CD4-positive, alpha-beta memory T cell (primary cell): ENCODE measurements at regions of chr16 and their contacts with region 1.

Region 1: DNA sequence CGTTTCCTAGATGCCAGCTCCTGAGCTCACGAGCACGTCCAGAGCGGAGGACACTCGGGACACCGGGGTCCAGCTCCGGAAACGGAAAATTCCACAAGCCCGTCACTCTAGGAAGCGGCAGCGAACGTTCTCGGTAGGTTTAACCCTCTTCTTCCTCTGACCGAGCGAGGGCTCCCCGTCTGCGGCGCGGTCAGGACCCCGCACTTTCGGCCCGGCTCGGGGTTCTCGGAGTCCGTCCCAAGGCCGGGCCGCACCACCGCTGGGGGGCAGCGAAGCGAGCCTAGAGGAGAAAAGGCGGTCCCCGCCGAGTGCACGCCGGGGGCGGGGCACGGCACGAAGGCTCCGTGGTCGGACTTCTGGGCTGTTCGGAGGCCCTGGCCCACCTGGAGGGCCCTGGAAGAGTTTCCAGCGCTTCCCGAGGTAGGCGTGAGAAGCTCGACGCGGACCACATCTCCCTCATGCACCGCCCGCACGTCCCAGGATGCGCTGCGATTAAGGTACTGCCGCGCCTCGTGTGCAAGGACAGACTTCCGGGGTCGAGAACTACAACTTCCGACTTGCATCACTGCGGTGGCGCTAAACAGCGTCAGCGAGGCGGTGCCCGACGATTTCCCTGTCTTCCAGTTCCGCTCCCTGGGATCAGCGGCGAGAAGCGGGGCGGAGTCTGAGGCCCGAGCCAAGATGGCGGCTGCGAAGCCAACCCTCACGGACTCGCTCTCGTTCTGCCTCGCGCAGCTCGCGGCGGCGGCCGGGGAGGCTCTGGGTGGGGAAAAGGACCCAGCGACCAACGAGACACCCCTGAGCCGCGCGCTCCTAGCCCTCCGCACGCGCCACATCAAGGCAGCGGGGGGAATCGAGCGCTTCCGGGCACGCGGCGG is at the start of gene ARMC5:
- DNase-seq: peak; percentile 98 to 99 (median 99)
- H3K4me3 ChIP-seq: peak within 1 kb of the TSS; percentile 79 to 95
- H3K4me3 Mint-ChIP-seq: peak within 1 kb of the TSS; percentile 91 to 95 (median 94)
- H3K27ac ChIP-seq: peak within 1 kb of the TSS; percentile 99
- H3K27ac Mint-ChIP-seq: peak within 1 kb of the TSS; percentile 94 to 99 (median 98)
- H3K4me1 ChIP-seq: peaks cover 53% of the 10 kb centered on the region
- H3K4me1 Mint-ChIP-seq: peaks cover 25 to 60% (median 37%) of the 10 kb centered on the region in 4 donors
- H3K27me3 ChIP-seq: no peaks in the 10 kb centered on the region
- H3K27me3 Mint-ChIP-seq: no peaks in the 10 kb centered on the region
- total RNA-seq, gene ARMC5: 6.5 to 7.0 TPM

Region 2: DNA sequence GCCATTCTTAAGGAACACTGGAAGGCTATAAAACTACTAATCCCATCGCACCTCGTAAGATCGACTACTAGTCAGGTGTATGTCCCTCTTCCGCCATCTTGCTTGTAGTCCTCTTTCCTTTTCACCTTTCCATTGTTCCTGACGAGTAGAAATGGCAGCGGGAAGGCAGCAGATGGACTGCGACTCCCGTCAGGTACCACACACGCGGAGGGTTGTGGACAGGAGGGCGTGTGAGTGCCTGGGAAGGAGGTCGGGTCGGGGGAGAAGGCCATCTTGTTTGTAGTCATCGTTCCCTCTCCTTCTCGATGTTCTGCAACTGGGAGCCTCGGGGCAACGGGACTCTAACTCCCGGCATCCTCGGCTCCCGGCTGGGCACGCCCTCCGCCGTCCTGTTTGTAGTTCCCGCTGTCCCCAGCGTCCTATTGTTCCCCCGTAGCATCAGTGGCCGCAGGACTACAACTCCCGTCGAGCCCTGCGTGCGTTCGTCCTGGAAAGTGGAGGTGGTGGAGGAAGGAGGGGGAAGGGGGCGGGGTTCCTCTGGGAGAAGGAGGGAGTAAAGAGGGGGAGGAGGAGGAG is 536.0 kb before region 1 on chr16:
- CTCF ChIA-PET with region 1: no interaction called
- POLR2A ChIA-PET with region 1: interaction called, 7 read pairs
- intact Hi-C with region 1: loop called (anchors 1 kb)
- DNase-seq: peak; percentile 95 to 98 (median 97)
- H3K4me3 ChIP-seq: peak overlapping the region; percentile 73 to 92
- H3K4me3 Mint-ChIP-seq: peak overlapping the region; percentile 95 to 100 (median 99)
- H3K27ac ChIP-seq: peak overlapping the region; percentile 90
- H3K27ac Mint-ChIP-seq: peak overlapping the region; percentile 98 to 100 (median 99)
- H3K4me1 ChIP-seq: peaks cover 12% of the 10 kb centered on the region
- H3K4me1 Mint-ChIP-seq: peaks cover 7 to 33% (median 17%) of the 10 kb centered on the region in 4 donors
- H3K27me3 ChIP-seq: no peaks in the 10 kb centered on the region
- H3K27me3 Mint-ChIP-seq: no peaks in the 10 kb centered on the region

Region 3: DNA sequence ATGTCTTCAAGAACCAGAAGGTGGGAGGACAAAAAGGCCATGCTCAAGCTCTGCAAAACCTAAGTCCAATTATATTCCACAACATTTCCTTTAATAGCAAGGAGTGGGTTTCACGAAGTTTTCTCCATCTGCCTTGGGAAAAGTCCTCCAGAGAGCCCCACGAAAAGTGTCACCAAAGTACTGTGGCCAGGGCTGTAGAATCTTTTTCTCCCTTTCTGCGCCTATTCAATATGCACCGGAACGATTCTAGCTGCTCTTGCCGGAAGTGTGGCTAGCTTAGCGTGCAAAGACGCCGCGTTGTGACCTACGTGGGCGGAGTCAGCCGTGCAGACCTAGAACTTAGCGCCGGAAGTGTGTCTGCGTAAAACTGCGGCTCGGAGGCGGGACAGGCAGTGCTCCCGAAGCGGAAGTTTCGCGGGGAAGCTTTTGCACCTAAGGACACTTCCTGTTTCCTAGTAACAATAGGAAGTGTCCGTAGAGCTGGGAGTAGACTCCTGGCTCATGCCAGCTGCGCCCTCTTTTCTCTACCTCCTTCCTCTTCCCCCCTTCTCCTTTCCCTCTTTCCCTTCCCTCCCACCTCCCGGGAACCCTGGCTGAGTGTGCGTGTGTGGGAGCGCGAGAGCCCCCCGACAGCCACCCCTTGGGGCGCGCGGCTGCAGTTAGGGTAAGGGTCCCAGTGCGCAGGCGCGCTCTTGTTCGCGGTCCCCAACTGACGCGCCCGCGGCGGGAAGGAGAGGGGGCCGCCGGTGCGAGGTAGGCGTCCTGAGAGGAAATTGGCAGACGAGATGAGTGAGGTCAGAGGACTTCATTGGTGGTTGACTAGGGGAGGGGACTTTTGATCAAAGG is 384.9 kb before region 1 on chr16 and contains the starts of genes ZNF646 and ZNF668:
- CTCF ChIA-PET with region 1: no interaction called
- POLR2A ChIA-PET with region 1: interaction called, 23 read pairs
- intact Hi-C with region 1: loop called (anchors 1 kb)
- DNase-seq: peak; percentile 94 to 99 (median 98)
- H3K4me3 ChIP-seq: peak within 1 kb of the TSS; percentile 81 to 86
- H3K4me3 Mint-ChIP-seq: peak within 1 kb of the TSS; percentile 92 to 99 (median 97)
- H3K27ac ChIP-seq: peak within 1 kb of the TSS; percentile 87
- H3K27ac Mint-ChIP-seq: peak within 1 kb of the TSS; percentile 93 to 99 (median 98)
- H3K4me1 ChIP-seq: peaks cover 27% of the 10 kb centered on the region
- H3K4me1 Mint-ChIP-seq: peaks cover 20 to 58% (median 30%) of the 10 kb centered on the region in 4 donors
- H3K27me3 ChIP-seq: no peaks in the 10 kb centered on the region
- H3K27me3 Mint-ChIP-seq: peaks cover 0 to 2% of the 10 kb centered on the region in 2 donors
- total RNA-seq, gene ZNF646: 46.9 to 47.0 TPM
- total RNA-seq, gene ZNF668: 11.7 to 13.6 TPM

Region 4: GRCh38 chr16:31179747-31180459 is 279.2 kb before region 1 on chr16 and contains the start of gene FUS:
- CTCF ChIA-PET with region 1: interaction called, 3 read pairs
- POLR2A ChIA-PET with region 1: interaction called, 12 read pairs
- intact Hi-C with region 1: no loop called
- DNase-seq: peak; percentile 89 to 95 (median 94)
- H3K4me3 ChIP-seq: peak within 1 kb of the TSS; percentile 96 to 97
- H3K4me3 Mint-ChIP-seq: peak within 1 kb of the TSS; percentile 97 to 99 (median 98)
- H3K27ac ChIP-seq: peak within 1 kb of the TSS; percentile 89
- H3K27ac Mint-ChIP-seq: peak within 1 kb of the TSS; percentile 95 to 100 (median 99)
- H3K4me1 ChIP-seq: peaks cover 66% of the 10 kb centered on the region
- H3K4me1 Mint-ChIP-seq: peaks cover 41 to 77% (median 54%) of the 10 kb centered on the region in 4 donors
- H3K27me3 ChIP-seq: no peaks in the 10 kb centered on the region
- H3K27me3 Mint-ChIP-seq: no peaks in the 10 kb centered on the region
- total RNA-seq, gene FUS: 500 to 536 TPM

Region 5: GRCh38 chr16:31472709-31473203 is 13.7 kb after region 1 on chr16:
- CTCF ChIA-PET with region 1: interaction called, 38 read pairs
- POLR2A ChIA-PET with region 1: interaction called, 72 read pairs
- intact Hi-C with region 1: loop called (anchors 1 kb)
- DNase-seq: peak in 3 of 5 donors; percentile 21 to 27 (median 25)
- H3K4me3 ChIP-seq: peak overlapping the region in 1 of 2 donors; percentile 27
- H3K4me3 Mint-ChIP-seq: peak overlapping the region; percentile 56 to 90 (median 76)
- H3K27ac ChIP-seq: no peak overlapping the region
- H3K27ac Mint-ChIP-seq: peak overlapping the region in 1 of 7 donors; percentile 42
- H3K4me1 ChIP-seq: peaks cover 34% of the 10 kb centered on the region
- H3K4me1 Mint-ChIP-seq: peaks cover 10 to 32% (median 27%) of the 10 kb centered on the region in 4 donors
- H3K27me3 ChIP-seq: no peaks in the 10 kb centered on the region
- H3K27me3 Mint-ChIP-seq: peaks cover 0 to 13% of the 10 kb centered on the region in 2 donors

Region 6: GRCh38 chr16:31700526-31701388 is 241.7 kb after region 1 on chr16:
- CTCF ChIA-PET with region 1: interaction called, 17 read pairs
- POLR2A ChIA-PET with region 1: interaction called, 21 read pairs
- intact Hi-C with region 1: loop called (anchors 5 kb)
- DNase-seq: peak; percentile 74 to 86 (median 81)
- H3K4me3 ChIP-seq: peak overlapping the region; percentile 61 to 70
- H3K4me3 Mint-ChIP-seq: peak overlapping the region; percentile 88 to 98 (median 92)
- H3K27ac ChIP-seq: peak overlapping the region; percentile 94
- H3K27ac Mint-ChIP-seq: peak overlapping the region; percentile 94 to 99 (median 96)
- H3K4me1 ChIP-seq: peaks cover 28% of the 10 kb centered on the region
- H3K4me1 Mint-ChIP-seq: peaks cover 25 to 33% (median 30%) of the 10 kb centered on the region in 4 donors
- H3K27me3 ChIP-seq: no peaks in the 10 kb centered on the region
- H3K27me3 Mint-ChIP-seq: no peaks in the 10 kb centered on the region

Region 7: DNA sequence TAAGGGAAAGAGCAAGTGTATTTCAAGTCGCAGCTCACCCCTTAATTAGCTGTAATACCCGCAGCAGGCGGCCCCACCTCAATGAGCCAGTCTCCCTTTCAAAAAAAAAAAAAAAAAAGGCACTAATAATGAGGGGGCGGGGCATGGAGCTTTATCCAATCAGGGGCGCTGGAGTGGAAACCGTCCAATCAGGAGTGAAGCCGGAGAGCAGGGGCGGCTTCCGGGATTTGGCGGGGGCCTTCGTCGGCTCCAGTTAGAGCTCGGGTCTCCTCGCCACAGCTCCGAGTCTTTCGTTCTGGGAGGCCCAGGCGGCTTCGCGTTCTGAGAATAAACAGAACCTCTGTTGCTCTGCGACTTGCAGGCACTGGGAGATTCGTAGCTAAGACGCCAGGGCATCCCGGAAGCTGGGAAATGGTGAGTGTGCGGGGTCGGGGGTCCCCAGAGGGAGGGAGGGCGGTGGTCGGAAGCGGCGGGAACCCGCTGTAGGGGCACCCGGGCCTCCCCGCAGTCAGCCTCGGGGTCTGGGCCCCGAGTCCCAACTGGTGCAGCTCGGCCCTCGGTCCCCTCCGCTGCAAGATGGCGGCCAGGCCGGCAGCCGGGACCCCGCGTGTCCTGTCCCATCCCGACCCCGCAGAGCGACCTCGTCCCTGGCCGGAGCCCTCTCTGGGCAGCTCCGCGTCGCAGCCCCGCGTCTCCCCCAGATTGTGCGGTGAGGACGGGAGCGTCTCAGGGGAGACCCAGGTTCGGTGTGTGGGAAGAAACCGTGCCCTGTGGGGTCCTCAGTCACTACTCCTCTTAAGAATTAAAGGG is 414.7 kb after region 1 on chr16 and contains the start of gene ZNF267:
- CTCF ChIA-PET with region 1: interaction called, 31 read pairs
- POLR2A ChIA-PET with region 1: interaction called, 33 read pairs
- intact Hi-C with region 1: loop called (anchors 1 kb)
- DNase-seq: peak; percentile 93 to 96 (median 94)
- H3K4me3 ChIP-seq: peak within 1 kb of the TSS; percentile 79 to 82
- H3K4me3 Mint-ChIP-seq: peak within 1 kb of the TSS; percentile 94 to 98 (median 96)
- H3K27ac ChIP-seq: peak within 1 kb of the TSS; percentile 97
- H3K27ac Mint-ChIP-seq: peak within 1 kb of the TSS; percentile 87 to 99 (median 98)
- H3K4me1 ChIP-seq: peaks cover 85% of the 10 kb centered on the region
- H3K4me1 Mint-ChIP-seq: peaks cover 60 to 89% (median 70%) of the 10 kb centered on the region in 4 donors
- H3K27me3 ChIP-seq: no peaks in the 10 kb centered on the region
- H3K27me3 Mint-ChIP-seq: no peaks in the 10 kb centered on the region
- total RNA-seq, gene ZNF267: 47.4 to 51.9 TPM